Activated naive CD4-positive, alpha-beta T cell treated with anti-CD3 and anti-CD28 coated beads, Interleukin-2, amount 10 ng/mL, durations not matched to agents 7 days and 5 days (primary cell): ENCODE measurements at regions of chr6 and their contacts with region 1.

Region 1: DNA sequence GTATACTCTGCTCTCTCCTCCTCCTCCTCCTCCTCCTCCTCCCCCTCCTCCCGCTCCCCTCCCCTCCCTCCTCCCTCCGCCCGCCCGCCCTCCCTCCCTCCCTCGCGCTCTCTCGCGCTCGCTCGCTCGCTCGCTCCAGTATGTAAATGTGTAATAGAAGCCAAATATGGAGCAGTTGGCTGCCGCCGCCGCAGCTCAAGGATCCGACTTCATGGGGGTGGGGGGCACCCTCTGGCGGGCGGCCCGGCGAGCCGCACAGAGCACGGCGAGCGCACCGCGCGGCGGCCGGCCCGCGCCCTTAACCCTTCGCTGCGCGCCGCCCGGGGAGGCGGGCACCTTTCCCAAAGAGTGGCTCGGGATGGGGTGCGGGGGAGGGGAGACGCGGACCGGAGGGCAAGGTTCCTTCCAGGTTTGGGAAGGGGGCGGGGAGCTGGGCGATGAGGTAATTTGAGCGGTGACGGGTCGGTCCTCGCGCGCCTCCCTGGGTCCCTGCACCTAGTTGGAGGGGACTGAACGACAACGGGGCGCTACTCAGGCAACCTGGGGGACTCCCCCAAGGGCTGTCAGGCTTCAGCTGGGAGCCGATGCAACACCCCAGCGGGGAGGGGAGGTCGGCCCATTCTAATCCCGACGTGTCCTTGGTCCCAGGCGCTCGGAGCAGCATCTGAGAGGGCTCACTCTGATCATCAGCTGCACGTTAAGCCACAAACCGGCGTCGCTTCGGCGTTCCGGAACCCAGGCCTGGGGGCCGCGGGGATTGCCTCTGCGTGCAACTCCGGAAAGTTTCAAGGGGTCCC is 409 bp upstream of the ATXN1 start:
- DNase-seq: peak; percentile 91
- H3K4me3 Mint-ChIP-seq: peak overlapping the region; percentile 99
- H3K27ac Mint-ChIP-seq: peak overlapping the region; percentile 99
- H3K4me1 Mint-ChIP-seq: peaks cover 63% of the 10 kb centered on the region
- H3K27me3 Mint-ChIP-seq: no peaks in the 10 kb centered on the region

Region 2: DNA sequence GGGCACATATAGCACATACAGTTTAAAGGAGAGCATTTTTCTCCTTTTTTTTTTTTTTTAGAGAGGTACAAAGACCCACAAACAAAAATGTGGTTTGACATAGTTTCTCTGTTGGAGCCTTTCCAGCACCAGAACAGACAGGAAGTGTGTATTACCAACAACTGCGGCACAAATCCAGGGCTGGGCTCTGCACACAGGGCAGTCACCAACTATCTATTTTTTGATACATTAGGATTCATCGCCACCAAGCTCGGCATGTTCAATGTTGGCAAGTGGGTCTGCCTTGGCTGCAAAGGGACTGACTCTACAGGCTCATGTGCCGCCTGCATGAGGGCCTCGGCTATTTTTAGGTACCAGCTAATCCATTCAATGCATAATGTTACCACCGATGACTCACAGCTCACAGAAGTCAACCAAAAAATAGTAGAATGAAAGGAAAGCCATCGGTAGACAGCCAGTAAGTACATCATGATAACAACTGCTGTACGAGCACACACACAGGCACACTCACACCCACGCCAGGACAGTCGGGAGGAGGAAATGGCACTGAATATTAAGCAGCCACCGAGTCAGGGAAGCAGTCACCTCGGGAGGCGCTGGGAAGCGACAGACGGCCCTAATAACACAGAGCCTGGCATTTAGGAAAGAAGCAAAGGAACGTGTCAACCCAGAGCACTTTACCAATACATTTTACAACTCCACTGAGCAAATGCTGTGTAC is 441.7 kb before region 1 on chr6:
- CTCF ChIA-PET with region 1: interaction called, 11 read pairs
- DNase-seq: peak; percentile 76
- H3K4me3 Mint-ChIP-seq: peak overlapping the region; percentile 46
- H3K27ac Mint-ChIP-seq: peak overlapping the region; percentile 90
- H3K4me1 Mint-ChIP-seq: peaks cover 70% of the 10 kb centered on the region
- H3K27me3 Mint-ChIP-seq: no peaks in the 10 kb centered on the region

Region 3: DNA sequence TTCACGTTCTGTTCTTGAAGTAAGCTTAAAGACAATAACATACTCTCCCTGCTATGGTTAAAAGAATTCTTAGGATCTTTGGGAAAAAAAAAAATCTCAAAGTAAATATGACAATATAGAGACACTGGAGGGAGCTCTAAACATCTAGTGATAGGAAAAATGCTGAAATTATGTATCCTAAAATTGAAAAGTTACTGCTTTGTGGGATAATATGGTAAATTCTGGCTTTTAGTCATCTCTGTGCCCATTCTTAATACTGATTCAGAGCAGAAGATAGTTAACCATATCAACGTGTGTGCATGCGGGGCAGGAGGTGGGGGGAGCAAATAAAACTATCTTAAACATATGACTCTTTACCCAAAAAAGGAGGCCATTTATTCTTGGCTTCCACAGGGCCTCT is 357.8 kb before region 1 on chr6:
- CTCF ChIA-PET with region 1: interaction called, 10 read pairs
- DNase-seq: no peak
- H3K4me3 Mint-ChIP-seq: no peak overlapping the region
- H3K27ac Mint-ChIP-seq: no peak overlapping the region
- H3K4me1 Mint-ChIP-seq: peaks cover 21% of the 10 kb centered on the region
- H3K27me3 Mint-ChIP-seq: no peaks in the 10 kb centered on the region

Region 4: DNA sequence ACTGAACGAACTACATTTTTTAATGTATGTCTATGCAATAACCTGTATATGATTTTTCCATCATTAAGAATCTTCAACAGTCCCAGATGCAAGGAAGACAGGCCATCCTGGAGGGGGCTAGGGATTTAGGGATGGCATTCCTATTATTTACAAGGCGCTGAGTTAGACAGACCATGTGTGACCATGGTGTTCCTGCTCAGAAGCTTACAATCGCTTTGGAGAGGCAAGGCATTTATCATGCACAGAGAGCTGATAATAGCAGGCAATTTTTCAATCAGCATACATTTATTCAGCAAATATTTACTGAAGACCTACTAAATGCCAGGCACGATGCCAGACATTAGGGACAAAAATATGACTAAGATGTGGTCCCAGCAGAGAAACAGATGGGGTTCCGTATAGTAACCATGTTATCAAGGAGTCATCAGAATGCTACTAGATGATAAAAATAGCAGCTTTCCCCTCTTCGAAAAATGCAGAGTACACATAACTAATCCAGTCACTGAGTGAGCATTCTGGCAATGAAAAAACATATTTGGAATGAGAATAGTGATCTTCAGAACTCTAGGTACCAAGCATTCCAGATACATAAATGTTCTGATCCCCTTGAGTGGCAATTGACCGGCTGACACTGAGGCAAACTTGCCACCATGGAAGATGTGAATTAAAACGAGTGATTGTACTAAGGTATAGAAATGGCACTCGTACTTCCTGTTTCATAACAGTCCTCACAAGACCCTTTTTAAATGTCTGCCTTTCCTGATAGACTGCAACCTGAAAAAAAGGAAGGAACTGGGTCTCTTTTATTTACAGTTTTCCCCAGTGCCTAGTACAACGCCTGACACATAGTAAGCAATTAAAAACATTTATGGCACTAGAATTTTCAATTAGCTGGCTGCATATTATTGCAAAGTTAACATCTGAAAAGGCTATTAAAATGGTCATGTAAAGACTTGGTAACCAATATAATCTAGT is 136.1 kb before region 1 on chr6:
- CTCF ChIA-PET with region 1: no interaction called
- DNase-seq: no peak
- H3K4me3 Mint-ChIP-seq: no peak overlapping the region
- H3K27ac Mint-ChIP-seq: no peak overlapping the region
- H3K4me1 Mint-ChIP-seq: peaks cover 4% of the 10 kb centered on the region
- H3K27me3 Mint-ChIP-seq: no peaks in the 10 kb centered on the region

Region 5: DNA sequence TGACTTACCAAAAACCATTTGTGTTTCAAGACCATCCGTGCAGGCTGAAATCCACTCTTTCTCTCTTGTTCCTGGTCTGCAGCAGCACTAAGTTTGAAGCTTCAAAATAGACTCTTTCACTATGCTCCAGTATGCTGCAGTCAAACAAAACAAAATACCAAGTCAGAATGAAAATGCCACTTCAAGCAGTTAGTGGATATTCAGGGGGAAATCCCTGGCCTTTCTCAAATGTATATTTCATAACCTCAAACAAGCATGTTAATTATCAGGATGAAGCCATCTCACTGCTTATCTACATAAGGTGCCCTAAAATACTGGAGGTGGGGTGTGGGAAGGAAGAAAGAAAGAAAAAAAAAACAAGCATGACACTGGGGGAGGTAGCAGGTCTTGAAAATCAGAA is 103.9 kb before region 1 on chr6:
- CTCF ChIA-PET with region 1: interaction called, 10 read pairs
- DNase-seq: no peak
- H3K4me3 Mint-ChIP-seq: no peak overlapping the region
- H3K27ac Mint-ChIP-seq: no peak overlapping the region
- H3K4me1 Mint-ChIP-seq: peaks cover 60% of the 10 kb centered on the region
- H3K27me3 Mint-ChIP-seq: no peaks in the 10 kb centered on the region

Region 6: DNA sequence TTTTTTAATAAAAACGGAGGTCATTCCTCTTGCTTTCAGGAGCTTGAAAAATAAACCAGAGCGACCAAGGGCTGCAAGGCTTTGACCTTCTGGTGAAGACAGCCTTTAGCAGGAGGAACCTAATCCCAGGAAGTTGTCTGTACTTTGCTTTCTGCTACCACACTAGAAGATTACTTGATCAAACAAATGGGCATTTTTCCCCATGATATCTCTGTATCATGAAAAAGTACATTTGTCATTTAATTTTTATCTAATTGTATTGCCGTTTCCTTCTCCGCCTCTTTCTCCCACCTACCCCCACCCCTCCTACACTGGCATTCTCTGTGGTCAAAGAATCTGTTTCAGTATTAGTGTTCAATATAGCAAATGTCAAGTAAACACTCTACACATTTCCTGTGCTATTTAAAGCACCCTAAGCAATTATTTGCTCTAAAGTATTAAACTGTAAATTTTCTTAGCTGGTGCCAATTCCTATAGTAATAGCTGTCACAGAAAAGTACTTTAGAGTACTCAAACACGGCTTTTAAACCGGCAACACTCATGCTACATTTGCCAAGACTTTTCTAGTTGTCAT is 30.1 kb before region 1 on chr6:
- CTCF ChIA-PET with region 1: interaction called, 11 read pairs
- DNase-seq: peak; percentile 65
- H3K4me3 Mint-ChIP-seq: peak overlapping the region; percentile 46
- H3K27ac Mint-ChIP-seq: peak overlapping the region; percentile 86
- H3K4me1 Mint-ChIP-seq: peaks cover 52% of the 10 kb centered on the region
- H3K27me3 Mint-ChIP-seq: no peaks in the 10 kb centered on the region